ENCODE measurements at regions of chr5 and their contacts with region 1.

Region 1: DNA sequence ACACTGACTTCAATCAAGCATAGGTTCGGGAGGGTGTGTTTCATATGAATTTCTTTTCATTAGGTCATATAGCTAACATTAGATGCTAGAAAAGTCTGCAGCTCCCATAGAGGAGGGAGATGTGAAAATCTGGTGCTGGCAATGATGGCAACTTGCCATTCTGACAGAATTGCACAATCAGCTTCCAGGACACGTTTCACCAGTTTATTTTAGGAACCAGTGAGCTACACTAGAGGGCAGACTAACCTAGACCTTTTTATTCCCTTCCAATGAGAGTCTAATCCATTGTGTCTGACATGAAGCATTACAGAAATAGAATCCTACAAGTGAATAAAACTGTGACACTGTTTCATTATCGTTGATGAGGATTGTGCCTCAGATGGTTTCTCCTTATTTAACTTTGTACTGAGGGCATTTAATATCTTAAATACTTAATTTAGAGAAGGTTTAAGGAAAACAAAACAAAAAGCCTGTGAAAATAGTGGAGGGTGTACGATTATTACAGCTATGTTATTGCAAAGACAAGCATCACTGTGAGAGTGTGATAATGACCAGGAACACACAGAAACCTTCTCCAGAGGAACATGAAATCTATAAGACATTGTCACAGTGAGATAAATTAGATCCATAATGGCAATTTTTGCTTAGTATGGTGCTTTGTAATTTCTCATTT is 363.3 kb upstream of the RPS23 start:
- DNase-seq: peak; percentile 19
- ATAC-seq: peak; percentile 87
- H3K4me3 ChIP-seq: no peak overlapping the region
- H3K27ac ChIP-seq: no peak overlapping the region
- H3K4me1 ChIP-seq: no peaks in the 10 kb centered on the region
- H3K27me3 ChIP-seq: no peaks in the 10 kb centered on the region; a peak in 1 of 4 replicates
- CTCF ChIP-seq: peak; percentile 58 to 72 (median 61); a peak in 5 of 6 replicates
- EP300 ChIP-seq: no peak
- POLR2A ChIP-seq: no peak
- RAD21 ChIP-seq: peak; percentile 94

Region 2: DNA sequence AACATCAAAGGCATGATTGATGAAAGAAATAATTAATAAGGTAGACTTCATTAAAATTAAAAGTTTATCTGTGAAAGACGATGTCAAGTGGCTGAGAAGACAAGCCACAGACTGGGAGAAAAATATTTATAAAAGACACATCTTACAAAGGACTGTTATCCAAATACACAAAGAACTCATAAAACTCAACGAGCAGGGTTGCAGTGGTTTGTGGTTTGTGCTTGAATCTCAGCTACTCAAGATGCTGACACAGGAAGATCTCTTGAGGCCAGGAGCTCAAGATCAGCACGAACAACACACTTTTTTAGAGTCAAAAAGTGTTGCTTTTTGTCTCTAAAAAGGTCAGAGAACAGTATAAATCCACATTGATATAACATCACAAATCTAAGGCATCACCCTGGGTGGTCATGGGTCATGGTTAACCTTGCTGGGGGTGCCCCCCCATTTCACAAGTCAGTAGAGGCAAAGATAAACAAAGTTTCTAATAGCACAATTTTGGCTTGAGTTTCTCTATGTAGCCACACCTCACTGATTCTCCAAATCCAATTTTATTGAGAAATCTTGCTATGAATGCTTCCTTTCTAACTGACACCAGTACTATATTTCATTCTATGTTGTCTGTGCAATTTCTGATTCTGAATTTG is 20.4 kb before region 1 on chr5:
- CTCF ChIA-PET with region 1: no interaction called
- POLR2A ChIA-PET with region 1: no interaction called
- RAD21 ChIA-PET with region 1: no interaction called
- SMC1A ChIA-PET with region 1: no interaction called
- in situ Hi-C with region 1: no loop called
- intact Hi-C with region 1: no loop called
- DNase-seq: no peak
- ATAC-seq: no peak
- H3K4me3 ChIP-seq: no peak overlapping the region
- H3K27ac ChIP-seq: no peak overlapping the region
- H3K4me1 ChIP-seq: no peaks in the 10 kb centered on the region
- H3K27me3 ChIP-seq: no peaks in the 10 kb centered on the region
- CTCF ChIP-seq: no peak
- EP300 ChIP-seq: no peak
- POLR2A ChIP-seq: no peak
- RAD21 ChIP-seq: no peak

Region 3: DNA sequence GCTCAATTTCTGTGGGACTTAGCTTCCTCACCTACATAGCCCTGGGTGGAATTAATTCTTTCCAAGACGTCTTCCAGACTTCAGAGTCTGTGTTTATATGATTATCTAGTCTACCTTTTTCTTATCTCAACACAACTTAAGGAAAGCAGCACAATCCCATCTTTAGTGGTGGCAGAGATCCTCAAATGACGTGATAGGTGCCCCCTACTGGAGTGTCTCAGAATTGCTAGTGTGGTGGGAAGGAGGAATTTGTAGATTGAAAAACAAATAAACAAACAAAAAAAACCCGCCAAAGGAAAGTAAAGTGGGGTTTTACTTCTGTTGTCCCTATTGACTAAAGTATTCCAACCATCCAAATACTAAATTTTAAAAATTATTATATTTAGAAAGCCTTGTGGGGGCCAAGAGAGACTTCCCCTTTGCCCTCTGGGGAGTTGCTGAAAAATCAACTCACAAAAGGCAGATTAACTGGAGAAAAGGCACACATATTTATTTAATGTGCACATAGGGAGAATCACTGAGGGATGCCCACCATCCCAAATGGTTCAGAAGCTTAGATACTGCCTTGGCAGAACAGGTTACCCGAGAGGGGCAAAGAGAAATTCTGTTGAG is 152.4 kb after region 1 on chr5:
- CTCF ChIA-PET with region 1: no interaction called
- POLR2A ChIA-PET with region 1: no interaction called
- RAD21 ChIA-PET with region 1: no interaction called
- SMC1A ChIA-PET with region 1: interaction called, 3 read pairs
- in situ Hi-C with region 1: no loop called
- intact Hi-C with region 1: loop called (anchors 5 kb)
- DNase-seq: no peak
- ATAC-seq: no peak
- H3K4me3 ChIP-seq: no peak overlapping the region
- H3K27ac ChIP-seq: no peak overlapping the region
- H3K4me1 ChIP-seq: no peaks in the 10 kb centered on the region
- H3K27me3 ChIP-seq: no peaks in the 10 kb centered on the region
- CTCF ChIP-seq: peak; percentile 19 to 66 (median 51); a peak in 5 of 6 replicates
- EP300 ChIP-seq: no peak
- POLR2A ChIP-seq: no peak
- RAD21 ChIP-seq: peak; percentile 44

Region 4: DNA sequence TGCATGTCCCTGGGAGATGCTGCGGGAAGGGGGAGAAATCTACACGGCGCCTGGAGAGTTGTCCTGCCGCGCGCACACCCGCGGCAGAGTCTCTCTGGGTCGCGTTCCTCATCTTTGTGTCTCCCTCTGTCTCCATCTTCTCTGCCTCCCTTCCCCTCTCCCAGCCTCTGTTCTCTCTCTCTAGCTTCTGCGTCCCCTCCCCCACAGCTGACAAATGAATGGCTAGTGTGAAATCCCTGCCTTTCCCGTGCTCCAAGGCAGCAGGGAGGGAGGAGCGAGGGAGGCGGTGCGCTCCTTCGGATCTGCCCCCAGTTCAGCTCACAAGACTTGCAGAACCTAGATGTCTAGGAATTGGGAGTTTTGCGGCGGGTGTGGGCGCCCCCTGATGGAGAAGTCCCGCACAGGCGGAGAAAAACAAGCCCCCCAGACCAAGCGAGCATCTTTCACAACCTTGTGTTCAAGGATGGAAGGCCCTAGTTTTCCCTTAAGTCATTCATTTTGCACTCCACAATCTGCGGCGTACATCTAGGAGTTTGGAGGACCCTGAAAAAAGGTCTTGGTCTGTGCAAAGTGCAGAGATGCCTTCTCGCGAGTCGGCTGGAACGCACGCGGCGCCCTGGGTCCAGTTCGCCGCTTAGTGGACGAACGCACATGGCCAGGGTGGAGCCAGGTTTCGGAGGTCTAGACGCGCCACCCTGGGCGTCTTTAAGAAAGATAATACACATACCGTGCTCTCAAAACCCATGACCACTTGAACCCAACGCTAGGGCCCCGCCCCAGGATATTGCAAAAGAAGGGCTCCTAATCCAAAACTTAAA is 832.1 kb after region 1 on chr5:
- CTCF ChIA-PET with region 1: interaction called, 7 read pairs
- POLR2A ChIA-PET with region 1: no interaction called
- RAD21 ChIA-PET with region 1: interaction called, 4 read pairs
- SMC1A ChIA-PET with region 1: interaction called, 4 read pairs
- in situ Hi-C with region 1: no loop called
- intact Hi-C with region 1: loop called (anchors 1 kb)
- DNase-seq: peak; percentile 24
- ATAC-seq: peak; percentile 83
- H3K4me3 ChIP-seq: peak overlapping the region; percentile 78
- H3K27ac ChIP-seq: no peak overlapping the region
- H3K4me1 ChIP-seq: 0 out of 2 replicates have a peak, but pooled peaks cover 10% of the 10 kb centered on the region
- H3K27me3 ChIP-seq: peaks cover 15 to 17% of the 10 kb centered on the region in 2 experiments
- CTCF ChIP-seq: peak; percentile 73 to 85 (median 83)
- EP300 ChIP-seq: no peak
- POLR2A ChIP-seq: no peak
- RAD21 ChIP-seq: peak; percentile 84